Breast epithelium (tissue), 4 donors: ENCODE measurements at regions of chr10 and their contacts with region 1.

Region 1: DNA sequence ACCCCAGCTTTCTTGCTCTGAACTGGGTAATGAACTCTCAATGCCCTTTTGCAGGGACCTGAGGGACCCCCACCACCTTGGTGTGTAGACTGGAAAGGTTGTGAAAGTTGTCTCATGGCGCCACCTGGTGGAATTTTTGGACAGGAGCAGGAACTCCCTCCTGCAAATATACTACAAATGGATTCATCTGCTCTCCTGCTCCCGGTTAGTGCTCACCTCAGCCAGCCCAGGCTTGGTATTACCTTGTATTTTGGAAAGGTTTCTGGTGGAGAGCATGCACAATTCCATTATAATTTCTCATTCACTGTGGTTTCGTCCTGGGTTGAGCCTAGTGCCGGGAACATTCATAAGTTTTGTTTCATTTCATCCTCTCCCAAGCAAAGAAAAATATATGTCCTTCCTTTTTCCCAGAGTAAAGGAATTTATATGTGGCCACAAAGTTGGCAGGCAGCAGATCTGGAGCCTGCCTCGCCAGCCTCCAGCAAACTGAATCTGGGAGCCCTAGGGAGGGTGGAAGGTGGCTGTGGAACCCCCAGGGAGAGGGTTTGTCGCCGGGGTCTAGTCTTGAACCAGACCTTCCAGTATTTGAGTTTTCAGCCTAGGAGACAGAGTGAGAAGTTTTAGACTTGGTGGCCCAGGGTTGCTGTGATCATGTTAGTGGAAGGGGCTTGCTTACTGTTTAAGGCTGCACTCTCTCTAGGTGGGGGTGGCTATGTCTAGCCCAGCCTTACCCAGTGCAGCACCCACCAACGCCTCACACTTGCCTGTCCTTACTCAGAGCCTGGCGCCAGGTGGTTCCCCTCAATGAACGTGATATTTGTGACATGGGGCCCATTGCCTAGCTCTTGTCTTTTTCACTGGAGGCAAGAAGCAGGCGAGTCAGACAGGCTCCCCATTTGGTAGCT is 9.5 kb downstream of the FAM241B start:
- DNase-seq: peak; percentile 56 to 62
- H3K4me3 ChIP-seq: no peak overlapping the region
- H3K27ac ChIP-seq: peak overlapping the region; percentile 54 to 77
- H3K4me1 ChIP-seq: no peaks in the 10 kb centered on the region
- H3K27me3 ChIP-seq: no peaks in the 10 kb centered on the region
- CTCF ChIP-seq: peak; percentile 51 to 85 (median 77)
- POLR2A ChIP-seq: no peak

Region 2: DNA sequence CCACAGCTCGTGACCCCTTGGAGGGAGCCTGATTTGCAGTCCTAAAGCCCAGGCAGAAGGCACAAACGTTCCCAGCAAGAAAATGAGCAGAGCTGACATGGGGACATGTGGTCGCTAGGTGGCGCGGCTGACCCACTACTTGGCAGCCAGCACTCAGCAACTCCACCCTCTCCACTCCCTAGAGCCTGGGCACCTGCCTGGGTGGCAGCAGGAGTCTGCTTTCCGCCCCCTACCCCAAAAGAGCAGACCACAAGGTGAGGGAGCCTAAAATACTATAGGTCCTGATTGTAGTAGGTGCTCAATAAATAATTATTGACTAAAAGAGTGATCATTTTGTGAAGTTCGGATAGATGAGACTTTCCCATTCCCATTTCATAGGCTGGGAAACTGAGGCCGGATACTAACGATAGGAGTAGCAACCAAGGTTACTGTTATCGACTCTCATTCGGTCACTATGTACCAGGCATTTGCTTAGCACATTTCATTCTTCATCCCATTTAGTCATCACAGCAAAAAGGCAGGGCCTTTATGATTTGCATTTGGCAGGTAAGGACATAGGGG is 123.8 kb before region 1 on chr10:
- intact Hi-C with region 1: loop called (anchors 10 kb)
- DNase-seq: no peak
- H3K4me3 ChIP-seq: no peak overlapping the region
- H3K27ac ChIP-seq: no peak overlapping the region
- H3K4me1 ChIP-seq: no peaks in the 10 kb centered on the region
- H3K27me3 ChIP-seq: no peaks in the 10 kb centered on the region
- CTCF ChIP-seq: peak in 2 of 3 donors; percentile 51 to 53
- POLR2A ChIP-seq: no peak

Region 3: GRCh38 chr10:69657430-69657829 is 17.9 kb after region 1 on chr10:
- intact Hi-C with region 1: no loop called
- DNase-seq: no peak
- H3K4me3 ChIP-seq: no peak overlapping the region
- H3K27ac ChIP-seq: no peak overlapping the region
- H3K4me1 ChIP-seq: no peaks in the 10 kb centered on the region
- H3K27me3 ChIP-seq: peaks cover 0 to 6% of the 10 kb centered on the region in 2 donors
- CTCF ChIP-seq: no peak
- POLR2A ChIP-seq: no peak

Region 4: GRCh38 chr10:69696073-69696731 is 56.7 kb after region 1 on chr10:
- intact Hi-C with region 1: no loop called
- DNase-seq: no peak
- H3K4me3 ChIP-seq: no peak overlapping the region
- H3K27ac ChIP-seq: no peak overlapping the region
- H3K4me1 ChIP-seq: no peaks in the 10 kb centered on the region
- H3K27me3 ChIP-seq: no peaks in the 10 kb centered on the region
- CTCF ChIP-seq: peak; percentile 9 to 42 (median 29)
- POLR2A ChIP-seq: no peak

Region 5: GRCh38 chr10:69716711-69717560 is 77.4 kb after region 1 on chr10:
- intact Hi-C with region 1: loop called (anchors 10 kb)
- DNase-seq: no peak
- H3K4me3 ChIP-seq: no peak overlapping the region
- H3K27ac ChIP-seq: no peak overlapping the region
- H3K4me1 ChIP-seq: no peaks in the 10 kb centered on the region
- H3K27me3 ChIP-seq: no peaks in the 10 kb centered on the region
- CTCF ChIP-seq: peak in 2 of 3 donors; percentile 55 to 72
- POLR2A ChIP-seq: no peak